ENCODE measurements at regions of chr1 and their contacts with region 1.

Region 1: GRCh38 chr1:226201029-226201593 is 14.6 kb upstream of the ACBD3 start:
- DNase-seq: peak; percentile 13
- ATAC-seq: peak; percentile 69
- H3K4me3 ChIP-seq: no peak overlapping the region
- H3K27ac ChIP-seq: no peak overlapping the region
- H3K4me1 ChIP-seq: peaks cover 0 to 5% of the 10 kb centered on the region in 2 experiments; a peak in 2 of 4 replicates
- H3K27me3 ChIP-seq: no peaks in the 10 kb centered on the region
- CTCF ChIP-seq: peak; percentile 49 to 62 (median 57)
- POLR2A ChIP-seq: no peak
- RAD21 ChIP-seq: peak; percentile 75

Region 2: GRCh38 chr1:225866061-225866837 is 334.9 kb before region 1 on chr1:
- CTCF ChIA-PET with region 1: no interaction called
- POLR2A ChIA-PET with region 1: no interaction called
- RAD21 ChIA-PET with region 1: no interaction called
- intact Hi-C with region 1: no loop called
- DNase-seq: no peak
- ATAC-seq: no peak
- H3K4me3 ChIP-seq: no peak overlapping the region
- H3K27ac ChIP-seq: no peak overlapping the region
- H3K4me1 ChIP-seq: peaks cover 15 to 18% of the 10 kb centered on the region in 2 experiments
- H3K27me3 ChIP-seq: no peaks in the 10 kb centered on the region
- CTCF ChIP-seq: no peak
- POLR2A ChIP-seq: no peak
- RAD21 ChIP-seq: no peak

Region 3: GRCh38 chr1:226332947-226333346 is 131.8 kb after region 1 on chr1:
- CTCF ChIA-PET with region 1: interaction called, 25 read pairs
- POLR2A ChIA-PET with region 1: interaction called, 3 read pairs
- RAD21 ChIA-PET with region 1: interaction called in 1 of 2 experiments, 3 read pairs
- intact Hi-C with region 1: loop called (anchors 2 kb)
- DNase-seq: no peak
- ATAC-seq: no peak; the same call in 1 of the 2 replicates
- H3K4me3 ChIP-seq: peak overlapping the region; percentile 16 to 45; a peak in 3 of 4 replicates
- H3K27ac ChIP-seq: no peak overlapping the region
- H3K4me1 ChIP-seq: peaks cover 3 to 7% of the 10 kb centered on the region in 2 experiments; a peak in 3 of 4 replicates
- H3K27me3 ChIP-seq: no peaks in the 10 kb centered on the region
- CTCF ChIP-seq: no peak
- POLR2A ChIP-seq: no peak
- RAD21 ChIP-seq: no peak

Region 4: GRCh38 chr1:226476648-226477319 is 275.7 kb after region 1 on chr1:
- CTCF ChIA-PET with region 1: no interaction called
- POLR2A ChIA-PET with region 1: no interaction called
- RAD21 ChIA-PET with region 1: no interaction called
- intact Hi-C with region 1: no loop called
- DNase-seq: no peak
- ATAC-seq: no peak
- H3K4me3 ChIP-seq: no peak overlapping the region
- H3K27ac ChIP-seq: no peak overlapping the region
- H3K4me1 ChIP-seq: no peaks in the 10 kb centered on the region
- H3K27me3 ChIP-seq: peaks cover 5% of the 10 kb centered on the region; the same call in 1 of the 2 replicates
- CTCF ChIP-seq: no peak
- POLR2A ChIP-seq: no peak
- RAD21 ChIP-seq: no peak

Measured in HCT116 (cell line).